A549 (cell line): ENCODE measurements at regions of chr18 and their contacts with region 1.

Region 1: DNA sequence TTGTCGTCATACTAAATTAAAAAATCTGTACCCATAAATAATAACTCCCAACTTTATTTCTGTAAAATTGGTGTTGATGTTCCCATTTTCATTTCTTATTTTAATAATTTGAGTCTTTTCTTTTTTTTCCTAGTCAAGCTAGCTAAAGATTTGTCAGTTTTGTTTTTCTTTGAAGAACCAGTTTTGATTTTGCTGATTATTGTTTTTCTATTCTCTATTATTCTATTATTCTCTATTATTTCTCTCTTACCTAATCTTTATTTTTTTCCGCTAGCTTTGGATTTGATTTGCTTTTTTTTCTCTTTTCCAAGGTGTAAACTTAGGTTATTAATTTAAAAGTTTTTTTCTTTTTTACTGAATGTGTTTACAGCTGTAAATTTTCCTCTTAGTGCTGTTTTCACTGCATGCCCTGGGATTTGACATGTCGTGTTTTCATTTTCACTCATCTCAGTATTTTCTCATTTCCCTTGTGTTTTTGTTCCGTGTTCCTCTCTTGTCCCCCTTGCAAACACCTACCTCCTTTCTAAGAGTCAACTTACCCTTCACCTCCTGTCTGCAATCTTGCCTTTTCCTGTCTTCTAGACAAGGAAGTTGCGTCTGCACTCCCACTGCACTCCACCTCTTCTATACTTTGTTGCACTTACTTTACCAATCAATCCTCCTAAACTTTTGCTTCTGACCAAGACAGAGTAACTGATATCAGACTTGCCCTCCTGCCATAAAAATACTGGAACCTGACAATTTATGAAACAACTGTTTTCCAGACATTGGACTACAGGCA is 18.8 kb downstream of the PSMG2 start:
- DNase-seq: no peak
- ATAC-seq: no peak
- H3K4me3 ChIP-seq: no peak overlapping the region
- H3K27ac ChIP-seq: no peak overlapping the region
- H3K4me1 ChIP-seq: no peaks in the 10 kb centered on the region
- CTCF ChIP-seq: no peak
- EP300 ChIP-seq: no peak
- POLR2A ChIP-seq: no peak
- RAD21 ChIP-seq: no peak

Region 2: GRCh38 chr18:12890506-12890905 is 168.8 kb after region 1 on chr18:
- CTCF ChIA-PET with region 1: interaction called, 32 read pairs
- POLR2A ChIA-PET with region 1: no interaction called
- DNase-seq: peak in 1 of 2 experiments; percentile 22
- ATAC-seq: peak; percentile 83 to 85; a peak in 5 of 6 replicates
- H3K4me3 ChIP-seq: no peak overlapping the region
- H3K27ac ChIP-seq: no peak overlapping the region
- H3K4me1 ChIP-seq: 0 out of 3 replicates have a peak, but pooled peaks cover 3% of the 10 kb centered on the region
- CTCF ChIP-seq: no peak
- EP300 ChIP-seq: no peak
- POLR2A ChIP-seq: no peak
- RAD21 ChIP-seq: 0 out of 5 replicates have a peak, but pooled peaks of 1 of the 2 experiments have one; percentile 16

Region 3: GRCh38 chr18:13539050-13539449 is 817.4 kb after region 1 on chr18:
- CTCF ChIA-PET with region 1: no interaction called
- POLR2A ChIA-PET with region 1: no interaction called
- DNase-seq: peak in 1 of 2 experiments; percentile 20
- ATAC-seq: no peak
- H3K4me3 ChIP-seq: no peak overlapping the region
- H3K27ac ChIP-seq: peak overlapping the region; percentile 77 to 86
- H3K4me1 ChIP-seq: peaks cover 55% of the 10 kb centered on the region
- CTCF ChIP-seq: no peak
- EP300 ChIP-seq: no peak
- POLR2A ChIP-seq: no peak
- RAD21 ChIP-seq: no peak